Calu3 (cell line): ENCODE measurements at regions of chr2 and their contacts with region 1.

Region 1: GRCh38 chr2:43798300-43798699 is 24.5 kb downstream of the DYNC2LI1 start:
- DNase-seq: no peak
- H3K4me3 Mint-ChIP-seq: no peak overlapping the region
- H3K27ac Mint-ChIP-seq: no peak overlapping the region
- H3K4me1 Mint-ChIP-seq: peaks cover 29% of the 10 kb centered on the region
- H3K27me3 Mint-ChIP-seq: no peaks in the 10 kb centered on the region
- CTCF ChIP-seq: peak; percentile 38

Region 2: GRCh38 chr2:43877782-43878464 is 79.6 kb after region 1 on chr2:
- CTCF ChIA-PET with region 1: interaction called, 6 read pairs
- intact Hi-C with region 1: loop called (anchors 2 kb)
- DNase-seq: peak; percentile 78
- H3K4me3 Mint-ChIP-seq: no peak overlapping the region
- H3K27ac Mint-ChIP-seq: no peak overlapping the region
- H3K4me1 Mint-ChIP-seq: no peaks in the 10 kb centered on the region
- H3K27me3 Mint-ChIP-seq: peaks cover 15% of the 10 kb centered on the region
- CTCF ChIP-seq: peak; percentile 95